ENCODE measurements at regions of chr17 and their contacts with region 1.

Region 1: GRCh38 chr17:64608540-64608981 is 53.5 kb downstream of the SMURF2 start:
- DNase-seq: no peak
- H3K4me3 Mint-ChIP-seq: no peak overlapping the region
- H3K27ac Mint-ChIP-seq: peak overlapping the region; percentile 70
- H3K4me1 Mint-ChIP-seq: peaks cover 21% of the 10 kb centered on the region
- H3K27me3 Mint-ChIP-seq: no peaks in the 10 kb centered on the region

Region 2: DNA sequence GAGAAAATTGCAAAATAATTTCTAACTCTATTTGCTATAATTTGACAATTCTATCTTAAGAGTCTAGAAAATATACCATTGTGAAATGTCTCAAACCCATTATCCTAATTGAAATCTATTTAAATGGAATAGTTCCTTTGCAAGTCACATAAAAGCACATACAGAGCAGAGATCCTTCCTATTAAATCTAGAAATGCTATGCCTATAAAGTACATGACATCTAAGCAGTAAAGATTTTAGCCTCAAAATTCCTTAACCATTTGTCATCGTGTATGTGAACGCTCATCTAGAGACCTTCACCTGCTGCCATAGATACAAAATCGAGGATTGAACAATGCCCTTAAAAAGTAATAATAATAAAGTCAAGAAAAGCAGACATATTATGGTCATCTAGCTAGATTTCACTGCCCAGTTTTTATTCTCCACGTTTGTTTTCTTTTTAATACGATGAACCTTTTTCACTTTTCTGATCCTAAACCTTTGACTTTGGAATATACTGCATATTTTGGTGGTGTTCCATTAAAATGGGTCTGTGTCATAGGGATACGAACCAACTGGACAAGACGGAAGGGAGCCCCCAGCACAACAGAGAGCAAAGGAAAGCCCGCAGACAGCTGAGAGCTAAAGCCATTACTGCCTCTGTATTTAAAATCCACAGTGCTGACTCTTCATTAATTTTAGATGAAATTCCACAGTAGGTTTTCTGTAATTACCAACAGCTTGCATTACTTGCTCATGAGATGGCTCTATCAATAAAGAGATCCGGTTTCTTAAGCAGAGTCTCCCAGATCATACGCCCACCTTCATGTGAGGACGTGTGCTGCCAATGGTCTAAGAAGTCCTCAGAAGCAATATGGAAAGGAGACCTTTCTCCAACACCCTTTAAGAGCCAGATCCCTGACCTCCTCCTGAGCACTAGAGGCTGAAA is 363.1 kb before region 1 on chr17:
- intact Hi-C with region 1: no loop called
- DNase-seq: no peak
- H3K4me3 Mint-ChIP-seq: no peak overlapping the region
- H3K27ac Mint-ChIP-seq: no peak overlapping the region
- H3K4me1 Mint-ChIP-seq: no peaks in the 10 kb centered on the region
- H3K27me3 Mint-ChIP-seq: no peaks in the 10 kb centered on the region

Region 3: GRCh38 chr17:64496786-64497564 is 111.6 kb before region 1 on chr17 and contains the start of gene POLG2:
- intact Hi-C with region 1: loop called (anchors 2 kb)
- DNase-seq: peak; percentile 94
- H3K4me3 Mint-ChIP-seq: peak within 1 kb of the TSS; percentile 100
- H3K27ac Mint-ChIP-seq: peak within 1 kb of the TSS; percentile 100
- H3K4me1 Mint-ChIP-seq: peaks cover 69% of the 10 kb centered on the region
- H3K27me3 Mint-ChIP-seq: no peaks in the 10 kb centered on the region
- total RNA-seq, gene POLG2: 33.3 and 36.5 TPM in 2 replicates

Region 4: DNA sequence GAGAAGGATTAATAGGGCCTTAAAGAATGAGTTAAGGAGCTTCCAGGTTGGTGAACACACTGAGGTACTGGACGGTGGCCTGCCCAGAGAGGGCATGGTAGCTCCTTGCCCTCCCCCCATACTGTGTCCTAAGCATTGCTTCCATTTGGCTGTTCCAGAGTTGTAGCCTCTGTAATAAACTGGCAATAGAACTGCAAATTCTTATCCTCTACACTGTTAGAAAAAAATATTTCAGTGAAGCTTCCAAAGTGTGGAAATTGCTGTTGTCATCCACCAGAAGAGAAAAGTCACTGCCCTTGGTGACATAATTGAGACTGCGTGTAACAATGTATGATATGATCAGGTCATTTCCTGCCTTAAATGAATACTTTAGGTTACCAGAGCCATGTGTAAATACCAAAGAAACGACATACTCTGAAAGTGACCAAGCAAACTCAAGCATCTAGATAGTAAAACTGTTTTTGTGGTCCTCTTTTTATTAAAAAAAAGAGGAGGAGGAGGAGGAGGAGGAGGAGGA is 35.9 kb before region 1 on chr17:
- intact Hi-C with region 1: loop called (anchors 2 kb)
- DNase-seq: peak; percentile 3
- H3K4me3 Mint-ChIP-seq: peak overlapping the region; percentile 40
- H3K27ac Mint-ChIP-seq: peak overlapping the region; percentile 82
- H3K4me1 Mint-ChIP-seq: peaks cover 17% of the 10 kb centered on the region
- H3K27me3 Mint-ChIP-seq: no peaks in the 10 kb centered on the region

Region 5: GRCh38 chr17:64580384-64581315 is 27.9 kb before region 1 on chr17:
- intact Hi-C with region 1: loop called (anchors 1 kb)
- DNase-seq: no peak
- H3K4me3 Mint-ChIP-seq: no peak overlapping the region
- H3K27ac Mint-ChIP-seq: peak overlapping the region; percentile 94
- H3K4me1 Mint-ChIP-seq: peaks cover 13% of the 10 kb centered on the region
- H3K27me3 Mint-ChIP-seq: no peaks in the 10 kb centered on the region

Region 6: DNA sequence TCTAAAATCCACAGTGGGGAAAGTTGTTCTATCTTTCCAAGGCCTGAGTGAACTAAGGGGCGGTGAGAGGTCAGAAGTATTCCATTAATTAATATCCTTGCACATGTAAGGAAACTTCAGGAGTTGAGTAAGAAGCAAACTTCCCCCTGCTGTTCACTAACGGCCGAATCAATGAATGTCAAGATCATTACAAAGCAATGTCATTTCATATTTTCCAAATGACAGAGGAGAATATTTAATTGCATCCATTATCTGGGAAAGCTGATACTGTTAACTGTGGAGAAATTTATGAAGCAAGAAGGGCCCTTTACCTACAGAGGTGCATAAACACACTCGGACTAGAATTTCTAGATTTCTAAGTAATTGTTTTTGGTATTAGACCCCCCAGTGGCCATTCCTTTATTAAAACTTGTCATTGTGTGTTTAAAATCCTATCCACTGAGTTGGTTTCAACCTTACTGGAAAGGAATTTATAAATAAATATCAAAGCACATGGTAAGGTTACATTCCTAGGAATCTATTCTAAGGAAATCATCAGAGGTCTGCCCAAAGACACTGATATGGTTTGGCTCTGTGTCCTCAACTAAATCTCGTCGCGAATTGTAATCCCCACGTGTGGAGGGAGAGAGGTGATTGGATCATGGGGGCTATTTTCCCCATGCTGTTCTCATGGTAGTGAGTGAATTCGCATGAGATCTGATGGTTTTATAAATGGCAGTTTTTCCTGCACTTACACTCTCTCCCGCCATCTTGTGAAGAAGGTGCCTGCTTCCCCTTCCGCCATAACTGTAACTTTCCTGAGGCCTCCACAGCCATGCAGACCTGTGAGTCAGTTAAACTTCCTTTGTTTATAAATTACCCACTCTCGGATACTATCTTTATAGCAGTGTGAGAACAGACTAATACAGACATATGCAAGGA is 74.0 kb after region 1 on chr17:
- intact Hi-C with region 1: no loop called
- DNase-seq: no peak
- H3K4me3 Mint-ChIP-seq: no peak overlapping the region
- H3K27ac Mint-ChIP-seq: no peak overlapping the region
- H3K4me1 Mint-ChIP-seq: no peaks in the 10 kb centered on the region
- H3K27me3 Mint-ChIP-seq: peaks cover 2% of the 10 kb centered on the region

Measured in activated T-helper 1 cell treated with anti-CD3 and anti-CD28 coated beads, Interleukin-12 subunit alpha, Interleukin-12 subunit beta, Interleukin-2, Interleukin-4 antibody, amounts not matched to agents 30 ng/mL and 10 ng/mL and 1 ng/mL, durations not matched to agents 14 hours and 24 hours and 36 hours (primary cell).